H1 (cell line): ENCODE measurements at regions of chr1 and their contacts with region 1.

Region 1: GRCh38 chr1:213443415-213443814 is 392.4 kb downstream of the RPS6KC1 start:
- DNase-seq: no peak
- H3K4me3 ChIP-seq: no peak overlapping the region
- H3K27ac ChIP-seq: no peak overlapping the region
- H3K4me1 ChIP-seq: peaks cover 0 to 3% (median 0%) of the 10 kb centered on the region in 4 experiments; a peak in 1 of 7 replicates
- H3K27me3 ChIP-seq: no peaks in the 10 kb centered on the region
- CTCF ChIP-seq: no peak
- EP300 ChIP-seq: no peak
- POLR2A ChIP-seq: no peak
- RAD21 ChIP-seq: no peak

Region 2: GRCh38 chr1:213423605-213424004 is 19.8 kb before region 1 on chr1:
- CTCF ChIA-PET with region 1: interaction called, 13 read pairs
- POLR2A ChIA-PET with region 1: no interaction called
- DNase-seq: no peak
- H3K4me3 ChIP-seq: no peak overlapping the region
- H3K27ac ChIP-seq: no peak overlapping the region
- H3K4me1 ChIP-seq: no peaks in the 10 kb centered on the region
- H3K27me3 ChIP-seq: no peaks in the 10 kb centered on the region
- CTCF ChIP-seq: no peak
- EP300 ChIP-seq: no peak
- POLR2A ChIP-seq: no peak
- RAD21 ChIP-seq: no peak